Activated B cell treated with CpG ODN at 0.5 μM for 24 hours (primary cell): ENCODE measurements at regions of chr9 and their contacts with region 1.

Region 1: GRCh38 chr9:129177791-129178559 is at the start of gene IER5L:
- DNase-seq: peak; percentile 94
- ATAC-seq: peak; percentile 90
- H3K4me3 Mint-ChIP-seq: peak within 1 kb of the TSS; percentile 86
- H3K27ac Mint-ChIP-seq: peak within 1 kb of the TSS; percentile 56
- H3K4me1 Mint-ChIP-seq: peaks cover 23% of the 10 kb centered on the region
- H3K27me3 Mint-ChIP-seq: peaks cover 17% of the 10 kb centered on the region
- CTCF ChIP-seq: no peak
- total RNA-seq, gene IER5L: 1.9 and 2.1 TPM in 2 replicates

Region 2: GRCh38 chr9:129038109-129038852 is 139.7 kb before region 1 on chr9:
- CTCF ChIA-PET with region 1: no interaction called
- POLR2A ChIA-PET with region 1: no interaction called
- intact Hi-C with region 1: no loop called
- DNase-seq: no peak
- ATAC-seq: no peak
- H3K4me3 Mint-ChIP-seq: peak overlapping the region; percentile 96
- H3K27ac Mint-ChIP-seq: no peak overlapping the region
- H3K4me1 Mint-ChIP-seq: peaks cover 29% of the 10 kb centered on the region
- H3K27me3 Mint-ChIP-seq: no peaks in the 10 kb centered on the region
- CTCF ChIP-seq: no peak

Region 3: DNA sequence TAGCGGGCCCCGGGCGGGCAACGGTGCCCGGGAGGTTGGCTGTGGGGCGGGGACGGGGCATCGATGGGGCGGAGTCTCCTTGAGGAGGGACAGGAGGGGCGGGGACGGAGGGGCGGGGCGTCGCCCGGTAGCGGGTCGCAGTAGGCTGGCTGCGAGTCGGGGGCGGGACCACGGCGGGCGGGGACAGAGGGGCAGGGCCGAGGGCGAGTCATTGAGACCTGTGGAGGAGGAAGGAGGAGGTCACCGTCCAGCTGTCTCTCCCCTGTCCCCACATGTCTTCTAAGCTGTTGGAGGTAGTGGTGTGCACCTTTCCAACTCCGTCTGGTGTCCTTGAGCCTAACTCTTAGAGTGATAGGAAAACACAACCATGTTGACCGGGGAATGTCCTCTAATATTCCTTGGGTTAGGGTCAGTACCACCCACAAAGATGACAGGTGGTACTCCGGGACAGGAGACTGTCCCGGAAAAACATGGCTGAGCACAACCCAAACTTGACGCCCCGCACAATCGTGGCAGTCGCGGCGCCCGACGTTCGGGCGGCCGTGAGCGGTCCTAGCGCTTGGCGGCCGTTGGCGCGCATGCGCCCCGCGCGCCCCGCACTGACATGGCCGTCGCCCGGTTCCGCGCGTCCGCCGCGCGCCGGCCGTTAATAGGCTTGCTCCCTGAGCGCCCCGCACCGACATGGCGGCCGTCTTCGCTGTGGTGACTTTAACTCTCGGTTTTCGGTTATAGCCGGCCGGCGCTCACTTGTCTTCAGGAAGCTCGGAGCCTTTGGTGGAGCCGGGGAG is 67.0 kb before region 1 on chr9 and contains the starts of genes CRAT and PTPA:
- CTCF ChIA-PET with region 1: no interaction called
- POLR2A ChIA-PET with region 1: no interaction called
- intact Hi-C with region 1: loop called (anchors 1 kb)
- DNase-seq: peak; percentile 91
- ATAC-seq: peak; percentile 88
- H3K4me3 Mint-ChIP-seq: peak within 1 kb of the TSS; percentile 95
- H3K27ac Mint-ChIP-seq: peak within 1 kb of the TSS; percentile 95
- H3K4me1 Mint-ChIP-seq: peaks cover 39% of the 10 kb centered on the region
- H3K27me3 Mint-ChIP-seq: no peaks in the 10 kb centered on the region
- CTCF ChIP-seq: no peak
- total RNA-seq, gene CRAT: 6.8 and 8.2 TPM in 2 replicates
- total RNA-seq, gene PTPA: 65.5 and 67.2 TPM in 2 replicates

Region 4: GRCh38 chr9:129202613-129203555 is 24.9 kb after region 1 on chr9:
- CTCF ChIA-PET with region 1: no interaction called
- POLR2A ChIA-PET with region 1: no interaction called
- intact Hi-C with region 1: loop called (anchors 1 kb)
- DNase-seq: peak; percentile 93
- ATAC-seq: peak; percentile 98
- H3K4me3 Mint-ChIP-seq: peak overlapping the region; percentile 81
- H3K27ac Mint-ChIP-seq: peak overlapping the region; percentile 73
- H3K4me1 Mint-ChIP-seq: no peaks in the 10 kb centered on the region
- H3K27me3 Mint-ChIP-seq: peaks cover 6% of the 10 kb centered on the region
- CTCF ChIP-seq: no peak

Region 5: DNA sequence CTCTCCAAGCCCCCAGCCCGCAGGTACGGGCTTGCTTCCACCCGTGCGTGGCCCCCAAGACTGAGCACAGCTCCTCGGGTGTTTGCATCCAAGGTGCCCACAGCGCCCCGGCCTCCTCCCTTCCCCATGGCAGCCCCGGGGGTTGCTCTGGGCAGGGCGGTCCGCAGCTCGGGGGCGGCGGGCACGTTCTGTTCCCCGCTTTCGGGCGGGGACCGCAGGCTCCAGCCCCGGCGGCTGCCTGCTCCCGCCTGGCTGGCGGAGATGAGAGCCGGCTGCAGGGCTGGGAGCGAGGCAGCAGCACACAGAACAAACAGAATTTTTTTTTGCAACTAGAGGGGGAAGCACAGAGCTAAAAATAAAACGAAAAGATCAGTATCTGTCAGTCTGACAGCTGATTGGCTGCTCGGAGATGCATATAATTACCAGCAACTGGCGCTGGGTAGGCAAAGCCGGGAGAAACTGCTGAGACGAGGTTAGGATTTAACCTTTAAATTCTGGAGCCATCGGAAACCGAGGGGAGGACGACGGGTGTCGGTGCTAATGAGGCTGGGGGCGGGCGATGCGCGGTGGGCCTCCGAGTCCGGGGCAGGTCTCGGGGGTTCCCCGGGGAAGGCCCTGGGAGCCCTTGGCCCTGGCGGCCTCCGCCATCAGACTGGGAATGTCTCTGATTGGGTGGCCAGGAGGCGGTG is 142.7 kb after region 1 on chr9:
- CTCF ChIA-PET with region 1: interaction called, 3 read pairs
- POLR2A ChIA-PET with region 1: interaction called, 3 read pairs
- intact Hi-C with region 1: loop called (anchors 2 kb)
- DNase-seq: peak; percentile 42
- ATAC-seq: peak; percentile 88
- H3K4me3 Mint-ChIP-seq: peak overlapping the region; percentile 85
- H3K27ac Mint-ChIP-seq: peak overlapping the region; percentile 52
- H3K4me1 Mint-ChIP-seq: peaks cover 13% of the 10 kb centered on the region
- H3K27me3 Mint-ChIP-seq: peaks cover 5% of the 10 kb centered on the region
- CTCF ChIP-seq: no peak

Region 6: DNA sequence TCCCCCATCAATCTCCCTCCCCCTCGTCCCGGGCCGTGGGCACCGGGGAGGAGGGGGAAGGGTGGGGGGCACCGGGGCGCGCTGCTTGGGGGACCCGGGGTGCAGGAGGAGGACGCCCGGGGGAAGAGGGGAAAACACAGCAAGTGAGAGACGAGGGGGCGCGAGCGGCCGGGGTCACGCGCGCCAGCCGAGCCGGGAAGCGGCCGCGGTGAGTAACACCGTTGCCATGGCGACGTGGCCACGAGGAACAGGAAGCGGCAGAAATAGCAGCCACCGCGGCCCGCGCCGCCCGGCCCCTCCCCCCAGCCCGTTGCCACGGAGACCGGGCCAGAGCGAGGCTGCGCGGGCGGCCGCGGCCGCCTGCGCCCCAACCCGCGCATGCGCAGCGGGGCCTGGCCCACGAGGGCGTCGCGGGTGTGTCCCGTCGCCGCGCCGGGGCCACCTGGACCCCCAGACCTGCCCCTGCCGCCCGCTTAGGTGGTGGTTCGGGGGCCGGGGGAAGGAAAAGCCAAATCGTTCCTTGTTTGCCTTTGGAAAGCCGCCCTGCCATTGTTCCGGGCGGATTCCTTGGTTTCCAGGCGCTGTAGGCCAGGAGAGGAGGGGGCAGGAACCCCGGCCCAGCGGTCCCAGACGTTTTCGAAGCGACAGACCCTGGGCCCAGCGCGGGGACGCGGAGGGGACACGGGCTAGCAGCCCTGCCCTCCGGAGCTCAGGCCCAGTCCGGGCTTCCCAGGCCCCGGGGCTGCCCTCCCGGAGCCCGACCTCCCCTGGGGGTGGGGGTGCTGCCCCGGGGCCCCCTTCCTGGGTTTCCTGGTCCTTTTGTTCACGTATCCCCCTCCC is 235.8 kb after region 1 on chr9:
- CTCF ChIA-PET with region 1: no interaction called
- POLR2A ChIA-PET with region 1: interaction called, 8 read pairs
- intact Hi-C with region 1: loop called (anchors 10 kb)
- DNase-seq: peak; percentile 99
- ATAC-seq: peak; percentile 79
- H3K4me3 Mint-ChIP-seq: peak overlapping the region; percentile 85
- H3K27ac Mint-ChIP-seq: peak overlapping the region; percentile 97
- H3K4me1 Mint-ChIP-seq: peaks cover 14% of the 10 kb centered on the region
- H3K27me3 Mint-ChIP-seq: no peaks in the 10 kb centered on the region
- CTCF ChIP-seq: no peak

Region 7: GRCh38 chr9:129487642-129488409 is 309.9 kb after region 1 on chr9:
- CTCF ChIA-PET with region 1: no interaction called
- POLR2A ChIA-PET with region 1: no interaction called
- intact Hi-C with region 1: loop called (anchors 2 kb)
- DNase-seq: no peak
- ATAC-seq: peak; percentile 12
- H3K4me3 Mint-ChIP-seq: peak overlapping the region; percentile 81
- H3K27ac Mint-ChIP-seq: peak overlapping the region; percentile 88
- H3K4me1 Mint-ChIP-seq: peaks cover 39% of the 10 kb centered on the region
- H3K27me3 Mint-ChIP-seq: peaks cover 11% of the 10 kb centered on the region
- CTCF ChIP-seq: no peak

Region 8: DNA sequence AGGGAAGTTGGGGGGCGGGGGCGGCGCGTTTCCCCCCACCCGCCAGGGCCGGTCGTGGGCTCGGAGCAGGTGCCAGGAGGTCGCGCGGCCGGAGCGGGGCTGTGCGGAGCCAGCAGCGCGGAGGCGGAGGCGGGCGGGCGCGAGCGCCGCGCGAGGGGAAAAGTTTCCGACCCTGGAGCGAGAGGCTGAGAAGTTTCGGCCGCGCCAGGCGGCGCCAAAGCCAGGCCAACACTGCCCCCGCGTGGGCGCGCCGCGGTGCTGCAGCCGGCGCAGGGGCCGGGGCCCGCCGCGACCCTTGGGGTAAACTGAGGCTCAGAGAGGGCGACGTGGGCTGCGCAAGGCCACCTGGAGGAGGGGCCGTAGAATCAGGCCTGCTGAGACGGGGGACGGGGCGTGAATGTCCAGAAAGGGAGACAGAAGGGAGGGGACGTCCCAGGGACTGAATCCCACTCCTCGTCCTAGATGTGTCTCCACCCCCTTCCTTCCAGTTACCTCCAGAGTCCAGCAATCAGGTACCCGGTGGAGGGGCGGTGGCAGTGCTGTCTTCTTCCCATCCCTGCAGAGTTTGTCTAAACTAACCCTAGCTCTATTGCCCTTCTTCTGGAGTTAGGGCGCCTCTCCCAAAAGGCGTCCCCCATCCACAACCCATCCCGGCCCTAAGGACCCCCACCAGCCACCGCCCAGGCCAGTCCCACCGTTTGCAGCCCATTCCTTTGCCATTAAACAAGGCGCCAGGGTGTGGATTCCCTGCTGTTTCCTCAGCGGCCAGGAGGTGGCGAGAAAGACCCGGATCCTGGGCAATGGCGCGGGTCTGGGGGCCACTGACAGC is 432.7 kb after region 1 on chr9:
- CTCF ChIA-PET with region 1: interaction called, 14 read pairs
- POLR2A ChIA-PET with region 1: interaction called, 9 read pairs
- intact Hi-C with region 1: loop called (anchors 1 kb)
- DNase-seq: peak; percentile 75
- ATAC-seq: peak; percentile 82
- H3K4me3 Mint-ChIP-seq: peak overlapping the region; percentile 81
- H3K27ac Mint-ChIP-seq: peak overlapping the region; percentile 41
- H3K4me1 Mint-ChIP-seq: peaks cover 24% of the 10 kb centered on the region
- H3K27me3 Mint-ChIP-seq: peaks cover 2% of the 10 kb centered on the region
- CTCF ChIP-seq: peak; percentile 37